Posterior vena cava (tissue), 2 donors: ENCODE measurements at regions of chr16 and their contacts with region 1.

Region 1: GRCh38 chr16:70402916-70403659 is 35.8 kb downstream of the ST3GAL2 start:
- DNase-seq: no peak

Region 2: DNA sequence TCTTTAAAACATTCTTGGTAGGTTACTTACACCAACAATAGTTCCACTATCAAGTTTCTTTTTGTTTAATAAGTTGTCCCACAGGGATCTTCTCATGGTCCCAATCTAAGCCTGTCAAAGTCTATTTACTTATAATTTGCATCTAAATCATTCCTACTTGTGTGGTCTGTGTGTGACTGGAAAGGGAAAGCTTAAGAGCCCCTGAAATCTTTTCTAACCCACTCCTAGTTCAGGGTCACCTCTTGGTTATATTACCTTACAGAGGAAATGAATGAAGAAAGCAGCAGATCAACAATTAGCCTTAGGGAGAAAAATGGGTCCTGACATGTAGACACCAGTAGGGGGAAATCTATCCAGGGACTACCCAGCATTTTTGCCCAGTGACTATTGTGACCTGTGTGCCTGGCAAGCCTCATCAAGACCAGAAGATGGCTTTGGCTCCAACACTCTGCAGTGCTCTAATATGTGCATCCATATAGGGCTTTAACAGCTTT is 1408.0 kb before region 1 on chr16:
- intact Hi-C with region 1: loop called in 1 of 2 experiments (anchors 10 kb)
- DNase-seq: no peak